ENCODE measurements at regions of chr11 and their contacts with region 1.

Region 1: GRCh38 chr11:67572747-67573419 is 10.7 kb upstream of the GSTP1 start:
- DNase-seq: peak in 1 of 2 experiments; percentile 81
- ATAC-seq: peak; percentile 52 to 80; a peak in 4 of 6 replicates
- H3K4me3 ChIP-seq: 0 out of 3 replicates have a peak overlapping the region, but pooled peaks have one; percentile 24
- H3K27ac ChIP-seq: peak overlapping the region; percentile 31 to 72; a peak in 4 of 6 replicates
- H3K4me1 ChIP-seq: peaks cover 13% of the 10 kb centered on the region
- CTCF ChIP-seq: peak; percentile 88
- EP300 ChIP-seq: no peak
- POLR2A ChIP-seq: no peak
- RAD21 ChIP-seq: peak; percentile 80 to 85

Region 2: DNA sequence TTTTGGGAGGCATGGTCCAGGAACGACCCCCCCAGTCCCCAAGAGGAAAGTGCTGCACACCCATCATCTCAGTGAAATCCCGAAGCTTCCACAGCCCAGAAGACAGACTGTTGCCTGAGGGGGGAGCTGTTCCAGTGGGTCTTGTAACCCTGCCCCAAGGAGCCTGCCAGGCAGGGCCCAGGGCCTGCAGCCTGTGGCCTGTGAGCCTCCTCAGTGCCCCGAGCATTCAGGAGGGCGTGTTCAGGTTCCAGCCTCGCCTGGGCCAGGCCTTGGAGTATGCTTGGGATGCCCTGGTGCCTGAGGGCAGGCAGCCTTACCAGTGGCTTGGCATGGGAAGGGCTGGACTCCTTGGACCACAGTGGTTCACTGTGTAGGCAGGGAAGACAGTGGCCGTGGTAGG is 31.7 kb before region 1 on chr11:
- CTCF ChIA-PET with region 1: interaction called, 12 read pairs
- POLR2A ChIA-PET with region 1: no interaction called
- DNase-seq: no peak
- ATAC-seq: peak; percentile 41 to 44; a peak in 2 of 6 replicates
- H3K4me3 ChIP-seq: no peak overlapping the region
- H3K27ac ChIP-seq: no peak overlapping the region
- H3K4me1 ChIP-seq: peaks cover 12% of the 10 kb centered on the region
- CTCF ChIP-seq: no peak
- EP300 ChIP-seq: no peak
- POLR2A ChIP-seq: no peak
- RAD21 ChIP-seq: no peak

Region 3: GRCh38 chr11:67583247-67584204 is 10.6 kb after region 1 on chr11 and contains the start of gene GSTP1:
- CTCF ChIA-PET with region 1: interaction called, 65 read pairs
- POLR2A ChIA-PET with region 1: interaction called, 6 read pairs
- DNase-seq: peak; percentile 81 to 90
- ATAC-seq: peak; percentile 88 to 93
- H3K4me3 ChIP-seq: peak within 1 kb of the TSS; percentile 92
- H3K27ac ChIP-seq: peak within 1 kb of the TSS; percentile 97 to 99
- H3K4me1 ChIP-seq: peaks cover 55% of the 10 kb centered on the region
- CTCF ChIP-seq: peak; percentile 75
- EP300 ChIP-seq: no peak
- POLR2A ChIP-seq: peak; percentile 99
- RAD21 ChIP-seq: peak; percentile 32 to 62; a peak in 4 of 5 replicates
- polyA plus RNA-seq, gene GSTP1: 1,034 and 1,447 TPM in 2 replicates

Region 4: DNA sequence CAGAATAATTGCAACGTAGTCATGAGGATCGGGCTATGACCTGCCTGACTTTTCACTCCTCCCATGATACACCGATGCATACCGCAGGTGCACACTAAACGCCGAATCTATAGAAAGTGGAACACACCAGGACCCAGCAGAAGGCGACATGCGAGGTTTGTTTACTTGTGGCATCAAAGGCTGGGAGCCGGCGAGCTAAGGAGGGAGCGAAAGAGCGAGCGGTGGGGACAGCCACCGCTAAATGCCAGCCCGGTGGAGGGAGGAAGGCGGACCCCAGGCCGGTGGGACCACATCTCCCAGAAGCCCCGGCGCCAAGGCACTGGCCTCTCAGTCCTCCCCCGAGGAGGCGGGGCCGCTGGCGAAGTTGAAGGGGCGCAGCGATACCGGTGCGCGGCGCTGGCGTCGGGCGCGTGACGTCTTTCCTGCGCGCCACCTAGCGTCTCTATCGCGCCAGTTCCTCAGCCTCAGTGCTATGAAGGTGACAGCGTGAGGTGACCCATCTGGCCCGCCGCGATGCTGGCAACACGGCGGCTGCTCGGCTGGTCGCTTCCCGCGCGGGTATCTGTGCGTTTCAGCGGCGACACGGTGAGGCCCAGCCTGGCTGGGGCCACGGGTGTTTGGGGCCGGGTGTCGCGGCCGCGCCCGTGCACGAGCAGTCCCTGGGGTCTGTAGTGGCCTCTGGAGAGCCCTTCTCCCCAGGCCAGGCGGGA is 33.8 kb after region 1 on chr11 and contains the start of gene NDUFV1:
- CTCF ChIA-PET with region 1: interaction called, 14 read pairs
- POLR2A ChIA-PET with region 1: no interaction called
- DNase-seq: peak; percentile 69 to 92
- ATAC-seq: peak; percentile 95 to 99
- H3K4me3 ChIP-seq: peak within 1 kb of the TSS; percentile 82
- H3K27ac ChIP-seq: peak within 1 kb of the TSS; percentile 76 to 91
- H3K4me1 ChIP-seq: peaks cover 19% of the 10 kb centered on the region
- CTCF ChIP-seq: peak; percentile 36; the same call in 2 of the 3 replicates
- EP300 ChIP-seq: no peak
- POLR2A ChIP-seq: peak; percentile 73
- RAD21 ChIP-seq: peak in 1 of 2 experiments; percentile 39; a peak in 2 of 5 replicates
- polyA plus RNA-seq, gene NDUFV1: 78.8 and 95.1 TPM in 2 replicates